Activated T-helper 1 cell treated with anti-CD3 and anti-CD28 coated beads, Interleukin-12 subunit alpha, Interleukin-12 subunit beta, Interleukin-2, Interleukin-4 antibody, amounts not matched to agents 30 ng/mL and 10 ng/mL and 1 ng/mL, durations not matched to agents 14 hours and 24 hours and 36 hours (primary cell): ENCODE measurements at regions of chr2 and their contacts with region 1.

Region 1: DNA sequence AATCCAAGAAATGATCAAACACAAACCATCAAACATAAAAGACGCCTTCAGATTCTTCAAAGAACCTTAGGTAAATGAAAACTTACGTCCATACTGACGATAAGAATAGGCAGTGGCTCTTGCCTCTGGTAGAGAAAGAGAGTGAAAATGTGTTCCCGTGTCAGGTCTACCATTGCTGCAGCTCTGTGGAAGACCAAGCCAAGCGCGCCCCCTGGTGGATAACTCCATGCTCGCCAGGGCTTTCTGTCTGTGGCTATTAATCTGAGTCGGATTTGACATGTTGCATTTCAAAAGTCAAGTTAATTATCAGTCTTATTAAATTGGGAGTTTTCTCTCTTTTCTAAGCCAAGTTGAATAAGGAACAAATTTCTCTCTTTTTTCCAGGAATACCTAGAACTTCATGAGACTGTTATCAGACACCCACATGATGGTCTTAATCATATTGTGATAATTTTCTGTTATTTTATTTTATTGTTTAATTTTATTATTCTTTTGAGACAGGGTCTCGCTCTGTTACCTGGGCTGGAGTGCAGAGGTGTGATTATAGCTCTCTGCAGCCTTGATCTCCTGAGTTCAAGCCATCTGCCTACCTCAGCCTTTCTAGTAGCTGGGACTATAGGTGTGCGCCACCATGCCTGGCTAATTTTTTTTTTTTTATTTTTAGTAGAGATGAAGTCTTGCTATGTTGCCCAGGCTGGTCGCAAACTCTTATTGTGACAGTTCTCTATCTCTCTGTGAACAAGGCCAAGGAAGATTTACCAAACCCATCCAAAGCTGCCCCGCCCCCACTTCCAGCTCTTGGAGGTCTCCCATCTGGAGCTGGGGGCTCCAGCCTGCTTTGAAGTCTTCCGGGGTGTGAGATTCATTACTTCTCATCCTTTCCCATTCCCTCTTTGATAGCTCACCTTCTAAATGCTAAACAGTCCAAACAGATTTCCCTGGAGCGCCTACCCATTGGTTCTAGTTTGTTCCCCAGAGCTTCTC is 15.8 kb upstream of the ZAP70 start:
- DNase-seq: peak; percentile 82
- H3K4me3 Mint-ChIP-seq: no peak overlapping the region
- H3K27ac Mint-ChIP-seq: no peak overlapping the region
- H3K4me1 Mint-ChIP-seq: peaks cover 19% of the 10 kb centered on the region
- H3K27me3 Mint-ChIP-seq: peaks cover 8% of the 10 kb centered on the region

Region 2: GRCh38 chr2:97645695-97646629 is 51.6 kb before region 1 on chr2 and contains the start of gene COX5B:
- intact Hi-C with region 1: loop called (anchors 1 kb)
- DNase-seq: peak; percentile 99
- H3K4me3 Mint-ChIP-seq: peak within 1 kb of the TSS; percentile 86
- H3K27ac Mint-ChIP-seq: peak within 1 kb of the TSS; percentile 97
- H3K4me1 Mint-ChIP-seq: peaks cover 29% of the 10 kb centered on the region
- H3K27me3 Mint-ChIP-seq: peaks cover 3% of the 10 kb centered on the region
- total RNA-seq, gene COX5B: 228 and 241 TPM in 2 replicates

Region 3: DNA sequence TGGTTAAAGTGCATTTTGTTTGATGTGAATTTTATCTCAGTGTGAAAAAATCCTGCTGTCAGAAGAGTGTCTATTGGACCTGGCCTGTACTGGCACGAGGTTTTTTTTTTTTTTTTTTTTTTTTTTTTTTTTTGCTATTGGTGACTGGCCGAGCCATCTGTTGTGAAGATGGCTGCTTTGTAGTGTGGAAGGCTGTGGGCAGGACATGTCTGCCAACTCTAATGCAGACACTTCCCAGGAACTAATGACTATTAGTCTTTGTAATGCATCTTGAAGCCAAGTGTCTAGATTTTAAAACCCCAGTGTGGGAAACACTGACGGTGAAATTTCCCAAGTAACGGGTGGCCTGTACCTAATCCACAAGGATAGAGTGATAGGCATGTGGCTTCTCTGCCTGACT is 50.2 kb after region 1 on chr2:
- intact Hi-C with region 1: loop called (anchors 1 kb)
- DNase-seq: no peak
- H3K4me3 Mint-ChIP-seq: no peak overlapping the region
- H3K27ac Mint-ChIP-seq: no peak overlapping the region
- H3K4me1 Mint-ChIP-seq: peaks cover 53% of the 10 kb centered on the region
- H3K27me3 Mint-ChIP-seq: no peaks in the 10 kb centered on the region